Activated CD4-positive, alpha-beta T cell treated with anti-CD3 and anti-CD28 coated beads, Interleukin-2, amount 10 ng/mL, durations not matched to agents 24 days and 14 days (primary cell): ENCODE measurements at regions of chr3 and their contacts with region 1.

Region 1: GRCh38 chr3:108221911-108222852 is at the start of gene IFT57:
- DNase-seq: peak; percentile 98
- H3K4me3 Mint-ChIP-seq: peak within 1 kb of the TSS; percentile 100
- H3K27ac Mint-ChIP-seq: peak within 1 kb of the TSS; percentile 95
- H3K4me1 Mint-ChIP-seq: peaks cover 46% of the 10 kb centered on the region
- H3K27me3 Mint-ChIP-seq: no peaks in the 10 kb centered on the region
- total RNA-seq, gene IFT57: 25.2 and 26.6 TPM in 2 replicates

Region 2: GRCh38 chr3:107927361-107928083 is 294.7 kb before region 1 on chr3:
- intact Hi-C with region 1: loop called (anchors 5 kb)
- DNase-seq: peak; percentile 90
- H3K4me3 Mint-ChIP-seq: peak overlapping the region; percentile 87
- H3K27ac Mint-ChIP-seq: peak overlapping the region; percentile 59
- H3K4me1 Mint-ChIP-seq: peaks cover 13% of the 10 kb centered on the region
- H3K27me3 Mint-ChIP-seq: peaks cover 19% of the 10 kb centered on the region

Region 3: GRCh38 chr3:108124337-108125152 is 97.6 kb before region 1 on chr3:
- intact Hi-C with region 1: loop called (anchors 2 kb)
- DNase-seq: peak; percentile 91
- H3K4me3 Mint-ChIP-seq: peak overlapping the region; percentile 96
- H3K27ac Mint-ChIP-seq: peak overlapping the region; percentile 99
- H3K4me1 Mint-ChIP-seq: peaks cover 53% of the 10 kb centered on the region
- H3K27me3 Mint-ChIP-seq: no peaks in the 10 kb centered on the region

Region 4: DNA sequence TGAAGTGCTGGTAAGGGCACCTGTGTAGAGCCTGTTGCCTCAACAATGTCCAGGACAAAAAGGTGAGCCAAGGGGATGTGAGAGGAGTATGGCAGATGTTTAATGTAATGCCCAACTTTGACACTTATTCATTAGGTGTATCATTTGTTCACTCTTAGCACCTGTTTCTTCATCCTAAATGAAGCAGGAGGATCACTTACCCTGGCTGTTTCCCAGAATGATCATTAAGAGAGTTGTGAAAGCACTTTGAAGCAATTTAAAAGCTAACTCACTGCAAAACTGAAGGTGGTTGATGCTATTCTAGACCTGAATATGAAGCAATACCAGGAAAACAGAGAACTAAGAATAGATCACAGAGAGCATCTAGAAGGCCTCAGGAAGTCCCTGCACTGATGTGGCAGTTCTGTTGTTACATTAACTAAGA is 70.7 kb after region 1 on chr3:
- intact Hi-C with region 1: loop called (anchors 1 kb)
- DNase-seq: peak; percentile 74
- H3K4me3 Mint-ChIP-seq: peak overlapping the region; percentile 58
- H3K27ac Mint-ChIP-seq: peak overlapping the region; percentile 85
- H3K4me1 Mint-ChIP-seq: peaks cover 60% of the 10 kb centered on the region
- H3K27me3 Mint-ChIP-seq: no peaks in the 10 kb centered on the region

Region 5: GRCh38 chr3:108388136-108389132 is 166.3 kb after region 1 on chr3:
- intact Hi-C with region 1: loop called (anchors 2 kb)
- DNase-seq: no peak
- H3K4me3 Mint-ChIP-seq: peak overlapping the region; percentile 13
- H3K27ac Mint-ChIP-seq: peak overlapping the region; percentile 80
- H3K4me1 Mint-ChIP-seq: peaks cover 18% of the 10 kb centered on the region
- H3K27me3 Mint-ChIP-seq: peaks cover 11% of the 10 kb centered on the region

Region 6: GRCh38 chr3:108477511-108478147 is 255.4 kb after region 1 on chr3:
- intact Hi-C with region 1: loop called (anchors 5 kb)
- DNase-seq: peak; percentile 86
- H3K4me3 Mint-ChIP-seq: no peak overlapping the region
- H3K27ac Mint-ChIP-seq: no peak overlapping the region
- H3K4me1 Mint-ChIP-seq: peaks cover 3% of the 10 kb centered on the region
- H3K27me3 Mint-ChIP-seq: peaks cover 10% of the 10 kb centered on the region

Region 7: GRCh38 chr3:108835101-108835500 is 612.9 kb after region 1 on chr3:
- intact Hi-C with region 1: loop called (anchors 5 kb)
- DNase-seq: peak; percentile 86
- H3K4me3 Mint-ChIP-seq: peak overlapping the region; percentile 90
- H3K27ac Mint-ChIP-seq: peak overlapping the region; percentile 98
- H3K4me1 Mint-ChIP-seq: peaks cover 70% of the 10 kb centered on the region
- H3K27me3 Mint-ChIP-seq: no peaks in the 10 kb centered on the region